Colonic mucosa (tissue), 4 donors: ENCODE measurements at regions of chr7 and their contacts with region 1.

Region 1: GRCh38 chr7:72785166-72785955 is 42.6 kb downstream of the TYW1B start:
- DNase-seq: no peak
- H3K4me3 ChIP-seq: no peak overlapping the region
- H3K27ac ChIP-seq: no peak overlapping the region
- H3K4me1 ChIP-seq: no peaks in the 10 kb centered on the region
- H3K27me3 ChIP-seq: no peaks in the 10 kb centered on the region
- CTCF ChIP-seq: no peak

Region 2: DNA sequence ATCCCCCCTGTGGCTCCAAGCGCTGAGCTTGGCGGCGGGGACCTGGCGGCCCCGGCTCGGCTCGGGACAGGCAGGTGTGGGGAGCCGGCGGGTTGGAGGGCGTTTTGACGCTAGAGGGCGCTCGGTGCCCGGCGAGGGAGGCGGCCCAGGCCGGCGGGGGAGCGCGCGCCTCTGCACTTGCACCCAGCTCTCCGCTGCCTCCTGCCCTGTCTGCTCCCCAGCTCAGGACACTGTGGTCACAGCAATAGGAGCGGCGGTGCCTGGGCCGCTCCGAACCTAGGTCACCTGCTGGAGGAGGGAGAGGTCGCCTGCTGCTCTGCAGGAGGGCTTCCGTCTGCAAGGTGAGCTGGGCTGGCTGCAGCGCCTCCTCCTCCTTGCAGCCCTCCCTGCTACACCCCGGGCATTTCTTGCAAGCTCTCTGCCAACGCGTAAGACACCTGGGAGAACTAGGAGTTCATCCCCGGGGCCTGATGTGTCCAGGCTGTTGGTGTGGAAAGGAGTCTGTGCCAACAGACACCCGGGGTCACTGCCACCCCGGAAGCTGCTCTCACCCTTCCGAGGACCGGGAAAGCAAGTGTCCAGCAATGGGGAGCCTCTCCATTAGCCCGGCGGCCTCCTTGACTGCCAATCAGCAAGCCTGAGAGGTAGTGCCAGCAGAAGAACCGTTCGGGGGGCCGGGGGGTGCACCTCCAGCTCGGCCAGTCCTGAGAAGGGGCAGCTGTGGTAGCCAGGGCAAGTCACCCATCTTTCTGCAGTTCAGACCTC is 1033.0 kb before region 1 on chr7:
- intact Hi-C with region 1: loop called (anchors 10 kb)
- DNase-seq: peak; percentile 45
- H3K4me3 ChIP-seq: no peak overlapping the region
- H3K27ac ChIP-seq: no peak overlapping the region
- H3K4me1 ChIP-seq: no peaks in the 10 kb centered on the region
- H3K27me3 ChIP-seq: no peaks in the 10 kb centered on the region
- CTCF ChIP-seq: peak; percentile 44

Region 3: GRCh38 chr7:72493850-72494661 is 291.3 kb before region 1 on chr7:
- intact Hi-C with region 1: loop called (anchors 5 kb)
- DNase-seq: peak; percentile 70
- H3K4me3 ChIP-seq: no peak overlapping the region
- H3K27ac ChIP-seq: no peak overlapping the region
- H3K4me1 ChIP-seq: no peaks in the 10 kb centered on the region
- H3K27me3 ChIP-seq: no peaks in the 10 kb centered on the region
- CTCF ChIP-seq: peak; percentile 58